ENCODE measurements at regions of chr7 and their contacts with region 1.

Region 1: DNA sequence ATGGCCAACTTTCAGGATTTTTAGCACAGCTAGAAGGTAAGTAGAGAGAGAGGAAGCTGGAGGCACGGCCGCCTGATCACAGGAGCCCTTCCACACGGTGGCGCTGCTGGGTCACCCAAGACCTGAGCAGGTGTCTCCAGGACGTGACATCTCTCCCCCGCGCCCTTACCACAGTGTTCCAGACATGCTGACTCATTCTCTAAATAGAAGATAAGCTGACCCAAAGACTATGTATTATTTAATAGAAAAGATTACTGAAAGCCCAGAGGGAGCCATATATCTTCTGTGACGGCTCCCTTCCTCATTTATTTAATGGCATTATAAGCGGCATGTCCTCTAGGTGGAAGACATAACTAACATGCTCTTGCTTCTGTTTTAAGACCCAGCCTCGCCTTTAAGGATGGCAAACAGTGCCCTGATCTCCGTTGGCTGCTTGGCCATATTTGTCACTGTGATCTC is 26.0 kb upstream of the MALSU1 start:
- DNase-seq: peak; percentile 94
- H3K4me3 Mint-ChIP-seq: peak overlapping the region; percentile 46
- H3K27ac Mint-ChIP-seq: no peak overlapping the region
- H3K4me1 Mint-ChIP-seq: peaks cover 12% of the 10 kb centered on the region
- H3K27me3 Mint-ChIP-seq: peaks cover 13% of the 10 kb centered on the region

Region 2: DNA sequence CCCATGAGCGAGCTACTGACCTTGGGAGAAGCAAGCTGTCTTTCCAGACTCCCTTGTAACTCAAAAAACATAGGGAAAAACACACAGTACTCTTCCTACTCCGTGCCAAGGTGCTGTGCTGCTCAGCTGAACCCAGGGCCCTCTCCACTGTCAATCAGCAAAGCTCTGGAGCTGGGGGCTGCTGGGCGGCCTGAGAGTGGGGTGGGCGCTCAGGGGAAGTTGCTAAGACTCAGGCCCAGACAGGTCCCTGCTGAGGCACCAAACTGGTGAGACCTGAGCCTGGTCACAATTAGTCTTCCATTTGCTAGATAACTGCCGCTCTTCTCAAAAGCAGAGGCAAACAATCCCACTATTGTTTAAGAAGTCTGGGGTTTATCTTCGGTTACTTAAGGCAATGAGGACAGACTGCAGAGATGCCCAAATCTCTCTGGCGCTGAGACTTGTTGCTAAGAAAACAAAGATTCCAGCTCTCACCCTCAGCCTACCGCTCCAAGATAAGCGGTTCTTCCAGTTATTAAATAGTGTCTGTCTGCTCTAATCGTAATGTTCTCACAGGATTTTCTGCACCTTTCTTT is 795.2 kb before region 1 on chr7:
- CTCF ChIA-PET with region 1: no interaction called
- DNase-seq: no peak
- H3K4me3 Mint-ChIP-seq: no peak overlapping the region
- H3K27ac Mint-ChIP-seq: no peak overlapping the region
- H3K4me1 Mint-ChIP-seq: peaks cover 10% of the 10 kb centered on the region
- H3K27me3 Mint-ChIP-seq: peaks cover 16% of the 10 kb centered on the region

Region 3: GRCh38 chr7:23261843-23262452 is 11.2 kb before region 1 on chr7:
- CTCF ChIA-PET with region 1: interaction called, 76 read pairs
- DNase-seq: peak; percentile 68
- H3K4me3 Mint-ChIP-seq: no peak overlapping the region
- H3K27ac Mint-ChIP-seq: no peak overlapping the region
- H3K4me1 Mint-ChIP-seq: no peaks in the 10 kb centered on the region
- H3K27me3 Mint-ChIP-seq: peaks cover 13% of the 10 kb centered on the region

Region 4: GRCh38 chr7:23347682-23348180 is 74.6 kb after region 1 on chr7:
- CTCF ChIA-PET with region 1: interaction called, 17 read pairs
- DNase-seq: no peak
- H3K4me3 Mint-ChIP-seq: peak overlapping the region; percentile 14
- H3K27ac Mint-ChIP-seq: no peak overlapping the region
- H3K4me1 Mint-ChIP-seq: peaks cover 29% of the 10 kb centered on the region
- H3K27me3 Mint-ChIP-seq: peaks cover 15% of the 10 kb centered on the region

Region 5: GRCh38 chr7:23431702-23432199 is 158.6 kb after region 1 on chr7:
- CTCF ChIA-PET with region 1: interaction called, 13 read pairs
- DNase-seq: no peak
- H3K4me3 Mint-ChIP-seq: no peak overlapping the region
- H3K27ac Mint-ChIP-seq: no peak overlapping the region
- H3K4me1 Mint-ChIP-seq: no peaks in the 10 kb centered on the region
- H3K27me3 Mint-ChIP-seq: peaks cover 17% of the 10 kb centered on the region

Region 6: DNA sequence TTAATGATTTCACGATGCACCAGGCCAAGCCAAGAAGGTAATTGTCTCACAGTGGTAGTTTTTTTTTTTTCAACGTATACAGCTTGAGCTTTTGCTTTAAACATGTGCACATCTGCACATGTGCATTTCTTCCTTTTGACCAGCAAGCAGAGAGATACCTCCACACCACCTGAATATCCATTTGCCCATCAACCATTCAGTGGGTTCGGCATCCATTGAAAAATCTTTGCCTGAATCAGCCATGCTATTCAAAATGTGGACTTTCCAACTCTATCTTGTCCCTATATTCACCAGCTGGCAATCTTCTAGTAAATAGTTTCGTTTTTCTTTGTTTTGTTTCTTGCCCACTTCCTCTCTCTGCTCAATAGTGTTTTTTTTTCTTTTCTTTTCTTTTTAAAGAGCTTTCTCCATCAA is 266.3 kb after region 1 on chr7:
- CTCF ChIA-PET with region 1: interaction called, 44 read pairs
- DNase-seq: no peak
- H3K4me3 Mint-ChIP-seq: peak overlapping the region; percentile 55
- H3K27ac Mint-ChIP-seq: peak overlapping the region; percentile 94
- H3K4me1 Mint-ChIP-seq: peaks cover 17% of the 10 kb centered on the region
- H3K27me3 Mint-ChIP-seq: no peaks in the 10 kb centered on the region

Measured in activated naive CD4-positive, alpha-beta T cell treated with anti-CD3 and anti-CD28 coated beads, Interleukin-2, amount 10 ng/mL, durations not matched to agents 7 days and 5 days (primary cell).